ENCODE measurements at regions of chr1 and their contacts with region 1.

Region 1: DNA sequence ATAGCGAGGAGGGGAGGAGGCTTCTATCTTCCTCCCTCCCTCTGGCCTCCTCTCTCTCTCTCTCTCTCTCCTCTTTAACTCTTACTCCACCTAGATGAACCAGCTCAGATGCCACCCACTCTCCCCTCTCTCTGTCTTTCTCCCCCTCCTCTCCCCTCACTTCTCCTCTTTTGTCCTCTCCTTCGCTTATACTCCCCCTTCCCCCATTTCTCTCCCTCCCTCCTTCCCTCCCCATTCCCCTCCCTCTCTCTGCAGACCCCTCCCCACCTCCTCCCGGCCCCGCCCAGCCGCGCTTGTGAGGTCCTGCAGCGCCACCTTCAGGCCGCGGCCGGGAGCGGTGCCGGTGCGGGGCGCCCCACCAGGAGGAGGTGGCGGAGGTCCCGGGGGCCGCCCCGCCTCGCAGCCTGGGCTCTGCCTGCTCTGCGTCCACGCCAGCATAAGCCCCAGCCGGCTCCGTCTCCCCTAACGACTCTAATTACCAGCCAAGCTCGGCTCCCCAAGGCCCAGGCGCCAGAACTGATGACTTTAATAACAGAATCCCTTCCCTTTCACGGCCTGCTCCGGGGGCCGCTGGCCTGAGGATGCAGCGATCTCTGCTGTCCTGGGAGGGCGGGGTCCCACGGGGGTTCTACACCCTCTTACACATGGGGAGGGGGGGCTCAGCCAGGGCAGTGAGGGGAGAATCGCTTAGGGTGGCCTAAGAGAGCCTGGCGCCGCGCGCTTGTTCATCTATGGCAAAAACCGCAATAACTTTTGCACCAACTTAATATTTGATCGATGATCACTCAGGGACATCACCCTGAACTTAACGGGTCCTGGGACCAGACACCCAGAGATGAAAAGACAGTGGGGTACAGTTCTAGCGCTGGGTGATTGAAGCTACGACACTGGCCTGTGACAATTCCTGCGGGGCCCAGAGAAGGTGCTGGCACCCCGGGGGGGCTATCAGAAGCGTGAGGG is 637.3 kb downstream of the MATN1 start:
- DNase-seq: no peak
- ATAC-seq: peak; percentile 76
- H3K4me3 ChIP-seq: no peak overlapping the region
- H3K27ac ChIP-seq: no peak overlapping the region
- H3K4me1 ChIP-seq: peaks cover 16 to 31% of the 10 kb centered on the region in 2 experiments
- H3K27me3 ChIP-seq: no peaks in the 10 kb centered on the region
- CTCF ChIP-seq: peak; percentile 81 to 89 (median 86)
- POLR2A ChIP-seq: no peak
- RAD21 ChIP-seq: peak; percentile 83

Region 2: GRCh38 chr1:29698033-29698432 is 388.1 kb before region 1 on chr1:
- CTCF ChIA-PET with region 1: interaction called, 6 read pairs
- POLR2A ChIA-PET with region 1: no interaction called
- RAD21 ChIA-PET with region 1: no interaction called
- intact Hi-C with region 1: loop called (anchors 1 kb)
- DNase-seq: peak; percentile 57
- ATAC-seq: peak; percentile 99
- H3K4me3 ChIP-seq: no peak overlapping the region
- H3K27ac ChIP-seq: no peak overlapping the region
- H3K4me1 ChIP-seq: peaks cover 3 to 9% of the 10 kb centered on the region in 2 experiments; a peak in 2 of 4 replicates
- H3K27me3 ChIP-seq: peaks cover 24% of the 10 kb centered on the region
- CTCF ChIP-seq: peak; percentile 70 to 85 (median 84)
- POLR2A ChIP-seq: no peak
- RAD21 ChIP-seq: peak; percentile 78

Region 3: DNA sequence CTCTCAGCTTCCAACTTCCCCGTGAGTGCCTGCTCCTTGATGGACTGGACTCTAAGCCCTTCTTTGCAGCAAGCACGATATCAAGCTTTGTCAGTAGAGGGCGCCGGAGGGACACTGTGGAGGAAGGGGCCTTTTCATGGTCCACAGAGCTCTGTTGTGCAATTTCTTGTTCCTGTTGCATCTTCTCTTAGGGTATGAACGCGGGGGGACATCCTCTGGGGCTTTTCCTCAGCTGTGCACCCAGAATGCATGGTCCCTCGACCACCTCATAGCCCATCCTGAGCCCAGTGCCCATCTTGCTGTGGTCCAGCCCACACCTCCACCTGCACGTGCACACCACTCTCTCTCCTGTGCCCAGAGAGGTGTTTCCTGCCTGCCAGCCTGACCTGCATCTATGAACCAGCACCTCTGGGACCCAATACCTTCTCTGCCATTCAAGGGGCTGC is 293.0 kb before region 1 on chr1:
- CTCF ChIA-PET with region 1: interaction called, 6 read pairs
- POLR2A ChIA-PET with region 1: no interaction called
- RAD21 ChIA-PET with region 1: interaction called in 1 of 2 experiments, 4 read pairs
- intact Hi-C with region 1: loop called (anchors 2 kb)
- DNase-seq: peak; percentile 61
- ATAC-seq: peak; percentile 94
- H3K4me3 ChIP-seq: no peak overlapping the region
- H3K27ac ChIP-seq: no peak overlapping the region
- H3K4me1 ChIP-seq: peaks cover 0 to 11% of the 10 kb centered on the region in 2 experiments; a peak in 2 of 4 replicates
- H3K27me3 ChIP-seq: no peaks in the 10 kb centered on the region
- CTCF ChIP-seq: peak; percentile 85 to 92 (median 90)
- POLR2A ChIP-seq: no peak
- RAD21 ChIP-seq: peak; percentile 91

Region 4: GRCh38 chr1:29875557-29876028 is 210.5 kb before region 1 on chr1:
- CTCF ChIA-PET with region 1: no interaction called
- POLR2A ChIA-PET with region 1: no interaction called
- RAD21 ChIA-PET with region 1: no interaction called
- intact Hi-C with region 1: loop called (anchors 10 kb)
- DNase-seq: no peak
- ATAC-seq: no peak
- H3K4me3 ChIP-seq: no peak overlapping the region
- H3K27ac ChIP-seq: no peak overlapping the region
- H3K4me1 ChIP-seq: peaks cover 0 to 4% of the 10 kb centered on the region in 2 experiments; a peak in 1 of 4 replicates
- H3K27me3 ChIP-seq: peaks cover 34% of the 10 kb centered on the region
- CTCF ChIP-seq: no peak
- POLR2A ChIP-seq: no peak
- RAD21 ChIP-seq: no peak

Measured in HCT116 (cell line).